ENCODE measurements at regions of chr6 and their contacts with region 1.

Region 1: GRCh38 chr6:108260809-108261569 is at the start of gene SNX3:
- DNase-seq: peak; percentile 93
- ATAC-seq: peak; percentile 96
- H3K4me3 ChIP-seq: peak within 1 kb of the TSS; percentile 91 to 93 (median 92)
- H3K27ac ChIP-seq: peak within 1 kb of the TSS; percentile 94
- H3K4me1 ChIP-seq: peaks cover 35% of the 10 kb centered on the region
- H3K27me3 ChIP-seq: no peaks in the 10 kb centered on the region; a peak in 1 of 5 replicates
- CTCF ChIP-seq: peak; percentile 42
- EP300 ChIP-seq: no peak
- POLR2A ChIP-seq: peak; percentile 61 to 85
- RAD21 ChIP-seq: no peak
- total RNA-seq, gene SNX3: 84.9 and 111 TPM in 2 replicates

Region 2: GRCh38 chr6:108200631-108201030 is 60.4 kb before region 1 on chr6:
- CTCF ChIA-PET with region 1: no interaction called
- POLR2A ChIA-PET with region 1: interaction called, 12 read pairs
- in situ Hi-C with region 1: no loop called
- intact Hi-C with region 1: no loop called
- DNase-seq: peak; percentile 72
- ATAC-seq: peak; percentile 90
- H3K4me3 ChIP-seq: peak overlapping the region; percentile 15 to 57 (median 26); a peak in 3 of 6 replicates
- H3K27ac ChIP-seq: peak overlapping the region; percentile 34
- H3K4me1 ChIP-seq: peaks cover 49% of the 10 kb centered on the region
- H3K27me3 ChIP-seq: peaks cover 0 to 1% of the 10 kb centered on the region in 2 experiments; a peak in 1 of 5 replicates
- CTCF ChIP-seq: peak; percentile 7; the same call in 1 of the 2 replicates
- EP300 ChIP-seq: no peak
- POLR2A ChIP-seq: no peak
- RAD21 ChIP-seq: no peak

Region 3: DNA sequence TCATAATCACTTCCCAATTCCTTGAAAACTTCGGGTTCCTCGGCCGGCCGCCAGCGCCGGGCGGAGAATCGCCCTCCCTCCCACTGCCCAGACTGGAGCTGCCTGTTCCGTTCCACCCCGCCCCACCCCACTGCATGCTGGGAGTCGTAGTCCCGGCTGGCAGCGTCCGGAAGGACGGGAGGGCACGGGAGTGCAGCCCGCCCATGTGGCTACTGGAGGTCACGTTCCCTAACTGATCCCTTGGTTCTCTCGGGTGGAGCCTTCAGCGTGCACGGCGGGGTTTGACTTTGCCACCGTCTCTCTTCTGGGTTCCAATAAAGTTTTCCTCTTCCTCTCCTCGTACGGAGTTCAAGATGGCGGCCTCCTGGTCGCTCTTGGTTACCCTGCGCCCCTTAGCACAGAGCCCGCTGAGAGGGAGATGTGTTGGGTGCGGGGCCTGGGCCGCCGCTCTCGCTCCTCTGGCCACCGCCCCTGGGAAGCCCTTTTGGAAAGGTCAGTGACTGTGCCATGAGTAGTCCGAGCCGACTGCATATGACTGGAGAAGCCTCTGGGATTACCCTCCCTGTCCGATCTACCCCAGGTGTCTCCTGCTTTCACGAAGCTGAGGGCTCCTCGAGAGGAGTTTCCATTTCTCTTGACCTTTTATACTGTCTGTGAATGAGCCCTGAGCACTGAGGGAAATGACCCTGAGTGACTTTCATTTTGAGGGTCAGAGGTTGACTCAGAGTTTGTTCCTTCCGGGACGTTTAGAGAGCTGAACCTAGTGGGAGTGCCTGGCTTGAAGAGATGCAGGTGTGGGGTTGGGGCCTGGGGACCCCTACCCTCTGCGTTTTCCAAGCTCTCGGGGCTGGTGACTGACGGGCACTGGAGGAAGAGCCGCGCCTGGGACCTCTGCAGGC is 34.0 kb after region 1 on chr6 and contains the start of gene AFG1L:
- CTCF ChIA-PET with region 1: no interaction called
- POLR2A ChIA-PET with region 1: interaction called, 36 read pairs
- in situ Hi-C with region 1: no loop called
- intact Hi-C with region 1: loop called (anchors 1 kb)
- DNase-seq: peak; percentile 86
- ATAC-seq: peak; percentile 96
- H3K4me3 ChIP-seq: peak within 1 kb of the TSS; percentile 59 to 84 (median 72)
- H3K27ac ChIP-seq: peak within 1 kb of the TSS; percentile 96
- H3K4me1 ChIP-seq: 0 out of 2 replicates have a peak, but pooled peaks cover 8% of the 10 kb centered on the region
- H3K27me3 ChIP-seq: no peaks in the 10 kb centered on the region; a peak in 1 of 5 replicates
- CTCF ChIP-seq: peak; percentile 31
- EP300 ChIP-seq: no peak
- POLR2A ChIP-seq: peak; percentile 64 to 77
- RAD21 ChIP-seq: no peak
- total RNA-seq, gene AFG1L: 14.0 and 18.1 TPM in 2 replicates

Region 4: DNA sequence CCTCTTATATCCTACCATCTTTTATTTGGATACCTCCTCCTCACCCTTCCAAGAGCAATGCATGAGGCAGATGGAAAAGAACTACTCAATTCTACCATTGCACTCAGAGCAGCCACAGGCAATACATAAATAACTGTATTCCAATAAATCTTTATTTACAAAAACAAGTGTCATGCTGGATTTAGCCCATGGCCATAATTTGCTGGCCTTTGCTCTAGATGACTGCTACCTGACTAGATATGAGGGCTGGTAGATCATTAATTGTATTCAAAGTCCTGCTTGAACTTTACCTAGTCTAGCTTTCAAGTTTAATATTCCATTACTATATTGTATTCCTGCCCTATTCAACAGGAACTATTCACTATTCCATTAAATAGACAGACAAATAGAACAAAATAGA is 71.0 kb after region 1 on chr6:
- CTCF ChIA-PET with region 1: no interaction called
- POLR2A ChIA-PET with region 1: no interaction called
- in situ Hi-C with region 1: no loop called
- intact Hi-C with region 1: no loop called
- DNase-seq: no peak
- ATAC-seq: no peak
- H3K4me3 ChIP-seq: no peak overlapping the region
- H3K27ac ChIP-seq: no peak overlapping the region
- H3K4me1 ChIP-seq: no peaks in the 10 kb centered on the region
- H3K27me3 ChIP-seq: no peaks in the 10 kb centered on the region; a peak in 1 of 5 replicates
- CTCF ChIP-seq: no peak
- EP300 ChIP-seq: no peak
- POLR2A ChIP-seq: no peak
- RAD21 ChIP-seq: no peak